Ascending aorta (tissue), 2 donors: ENCODE measurements at regions of chr14 and their contacts with region 1.

Region 1: GRCh38 chr14:76876076-76876475 is 49.9 kb downstream of the LRRC74A start:
- DNase-seq: no peak
- H3K4me3 ChIP-seq: no peak overlapping the region
- H3K27ac ChIP-seq: no peak overlapping the region
- H3K4me1 ChIP-seq: no peaks in the 10 kb centered on the region
- H3K27me3 ChIP-seq: no peaks in the 10 kb centered on the region
- CTCF ChIP-seq: peak; percentile 91 to 93 (median 91)

Region 2: DNA sequence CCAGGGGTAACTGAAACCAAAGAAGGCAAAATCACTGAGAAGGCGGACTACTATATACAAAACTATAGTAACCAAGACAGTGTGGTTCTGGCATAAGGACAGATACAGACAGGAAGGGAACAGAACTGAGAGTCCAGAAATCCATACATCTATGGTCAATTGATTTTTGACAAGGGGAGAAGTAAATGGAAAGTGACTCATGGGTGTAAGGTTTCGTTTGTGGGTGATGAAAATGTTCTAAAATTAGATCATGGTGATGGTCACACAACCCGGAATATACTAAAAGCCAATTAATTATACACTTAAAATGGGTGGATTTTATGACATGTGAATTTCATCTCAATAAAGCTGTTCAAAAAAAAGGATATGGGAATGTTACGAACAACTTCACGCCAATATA is 82.1 kb before region 1 on chr14:
- intact Hi-C with region 1: no loop called
- DNase-seq: no peak
- H3K4me3 ChIP-seq: no peak overlapping the region
- H3K27ac ChIP-seq: no peak overlapping the region
- H3K4me1 ChIP-seq: no peaks in the 10 kb centered on the region
- H3K27me3 ChIP-seq: no peaks in the 10 kb centered on the region
- CTCF ChIP-seq: no peak

Region 3: DNA sequence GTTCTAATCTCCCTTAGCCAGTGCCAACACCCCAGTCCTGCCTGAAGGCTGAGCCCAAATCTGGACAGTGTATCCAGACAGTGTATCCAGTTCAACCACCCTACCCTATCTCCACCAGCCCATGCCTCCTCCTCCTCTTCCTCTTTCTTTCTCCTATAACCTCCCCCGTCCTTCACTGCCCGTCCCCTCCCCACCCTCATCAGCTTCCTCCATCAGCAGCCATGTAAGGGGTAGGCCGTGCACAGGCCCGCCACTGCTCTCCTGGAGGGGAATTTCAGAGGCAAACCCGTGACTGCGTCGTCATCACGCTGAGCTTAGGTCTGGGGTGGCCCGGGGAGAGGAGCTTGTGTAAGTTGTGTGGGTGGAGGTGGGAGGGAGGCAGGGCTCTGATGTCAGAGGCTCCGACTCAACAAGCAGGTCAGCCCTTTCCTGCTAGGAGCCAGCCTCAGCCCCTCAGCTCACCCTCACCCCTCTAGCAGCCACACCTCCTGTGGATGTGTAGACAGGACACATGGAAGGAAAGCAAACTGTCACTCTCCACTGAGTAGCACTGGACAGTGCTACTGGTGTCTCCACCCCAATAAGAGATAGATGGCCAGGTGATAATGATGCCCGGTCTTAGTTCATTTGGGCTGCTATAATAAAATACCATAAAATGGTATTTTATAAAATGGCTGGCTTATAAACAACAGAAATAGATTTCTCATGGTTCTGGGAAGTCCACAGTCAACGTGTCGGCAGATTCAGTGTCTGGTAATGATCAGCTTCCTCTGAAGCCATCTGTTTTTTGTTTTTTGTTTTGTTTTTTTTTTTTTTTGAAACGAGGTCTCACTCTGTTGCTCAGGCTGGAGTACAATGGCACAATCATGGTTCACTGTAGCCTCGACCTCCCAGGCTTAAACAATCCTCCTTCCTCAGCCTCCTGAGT is 102.0 kb after region 1 on chr14:
- intact Hi-C with region 1: no loop called
- DNase-seq: peak; percentile 60 to 77
- H3K4me3 ChIP-seq: no peak overlapping the region
- H3K27ac ChIP-seq: no peak overlapping the region
- H3K4me1 ChIP-seq: peaks cover 2 to 7% of the 10 kb centered on the region in 2 donors
- H3K27me3 ChIP-seq: no peaks in the 10 kb centered on the region
- CTCF ChIP-seq: no peak

Region 4: GRCh38 chr14:77053046-77053841 is 177.2 kb after region 1 on chr14:
- intact Hi-C with region 1: loop called (anchors 5 kb)
- DNase-seq: peak in 1 of 2 donors; percentile 84
- H3K4me3 ChIP-seq: no peak overlapping the region
- H3K27ac ChIP-seq: peak overlapping the region; percentile 72 to 79
- H3K4me1 ChIP-seq: peaks cover 0 to 17% of the 10 kb centered on the region in 2 donors
- H3K27me3 ChIP-seq: no peaks in the 10 kb centered on the region
- CTCF ChIP-seq: peak; percentile 83 to 93 (median 89)

Region 5: GRCh38 chr14:77124345-77125280 is 248.5 kb after region 1 on chr14:
- intact Hi-C with region 1: loop called (anchors 10 kb)
- DNase-seq: peak in 1 of 2 donors; percentile 75
- H3K4me3 ChIP-seq: peak overlapping the region; percentile 34 to 81
- H3K27ac ChIP-seq: no peak overlapping the region
- H3K4me1 ChIP-seq: peaks cover 5 to 8% of the 10 kb centered on the region in 2 donors
- H3K27me3 ChIP-seq: no peaks in the 10 kb centered on the region
- CTCF ChIP-seq: peak in 2 of 3 experiments; percentile 15 to 91

Region 6: GRCh38 chr14:77314043-77314442 is 438.0 kb after region 1 on chr14:
- intact Hi-C with region 1: loop called (anchors 2 kb)
- DNase-seq: no peak
- H3K4me3 ChIP-seq: no peak overlapping the region
- H3K27ac ChIP-seq: no peak overlapping the region
- H3K4me1 ChIP-seq: peaks cover 0 to 3% of the 10 kb centered on the region in 2 donors
- H3K27me3 ChIP-seq: no peaks in the 10 kb centered on the region
- CTCF ChIP-seq: no peak